Activated CD4-positive, alpha-beta memory T cell treated with anti-CD3 and anti-CD28 coated beads, Interleukin-2, amount 10 ng/mL, durations not matched to agents 7 days and 5 days (primary cell): ENCODE measurements at regions of chr9 and their contacts with region 1.

Region 1: GRCh38 chr9:137254624-137255447 is at the start of gene NELFB:
- DNase-seq: peak; percentile 96
- H3K4me3 Mint-ChIP-seq: peak within 1 kb of the TSS; percentile 89
- H3K27ac Mint-ChIP-seq: peak within 1 kb of the TSS; percentile 83
- H3K4me1 Mint-ChIP-seq: peaks cover 18% of the 10 kb centered on the region
- H3K27me3 Mint-ChIP-seq: peaks cover 3% of the 10 kb centered on the region
- total RNA-seq, gene NELFB: 58.8 to 59.6 TPM

Region 2: DNA sequence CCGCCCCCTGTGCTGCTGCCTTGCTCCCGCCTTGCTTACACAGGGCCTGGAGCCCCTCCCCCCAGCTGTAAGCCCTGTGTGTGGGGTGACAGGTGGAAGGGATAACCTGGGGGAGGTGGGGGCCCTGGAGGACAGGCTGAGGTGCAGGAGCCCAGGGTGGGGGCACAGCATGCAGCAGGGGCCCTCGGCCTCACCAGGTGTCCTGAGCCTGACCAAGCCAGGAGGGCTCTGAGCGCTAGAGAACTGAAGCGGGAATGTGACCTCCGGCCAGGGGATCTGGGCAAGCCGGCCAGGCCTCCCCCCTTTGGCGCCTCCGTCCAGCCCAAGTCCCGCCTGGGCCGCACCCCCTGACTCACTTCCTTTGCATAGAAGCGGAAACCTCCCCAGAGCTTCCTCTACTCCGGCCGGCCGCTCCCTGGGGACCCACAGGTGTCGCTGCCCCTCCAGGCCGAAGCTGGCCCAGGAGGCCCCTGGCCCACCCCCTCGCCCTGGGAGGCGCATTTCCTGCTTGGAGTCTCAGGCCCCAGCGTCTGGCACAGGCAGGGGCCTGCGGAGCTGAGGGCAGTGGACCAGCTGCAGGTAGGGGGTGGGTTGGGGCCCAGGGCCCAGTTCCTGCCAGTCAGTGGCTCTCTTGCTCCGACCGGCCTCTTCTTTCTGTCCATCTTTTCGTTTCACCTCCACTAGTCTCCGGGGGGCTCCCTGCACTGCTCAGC is 22.6 kb after region 1 on chr9 and contains the start of gene TOR4A:
- CTCF ChIA-PET with region 1: no interaction called
- POLR2A ChIA-PET with region 1: interaction called, 13 read pairs
- DNase-seq: peak; percentile 73
- H3K4me3 Mint-ChIP-seq: peak within 1 kb of the TSS; percentile 84
- H3K27ac Mint-ChIP-seq: peak within 1 kb of the TSS; percentile 79
- H3K4me1 Mint-ChIP-seq: peaks cover 26% of the 10 kb centered on the region
- H3K27me3 Mint-ChIP-seq: no peaks in the 10 kb centered on the region
- total RNA-seq, gene TOR4A: 22.4 to 23.2 TPM